ENCODE measurements at regions of chr12 and their contacts with region 1.

Region 1: GRCh38 chr12:85260904-85261303 is 19.1 kb upstream of the ALX1 start:
- DNase-seq: no peak
- ATAC-seq: no peak
- H3K4me3 ChIP-seq: no peak overlapping the region
- H3K27ac ChIP-seq: no peak overlapping the region
- H3K4me1 ChIP-seq: no peaks in the 10 kb centered on the region
- H3K27me3 ChIP-seq: no peaks in the 10 kb centered on the region
- CTCF ChIP-seq: no peak
- POLR2A ChIP-seq: no peak
- RAD21 ChIP-seq: no peak

Region 2: GRCh38 chr12:85007836-85008235 is 253.1 kb before region 1 on chr12:
- CTCF ChIA-PET with region 1: no interaction called
- POLR2A ChIA-PET with region 1: no interaction called
- dilution Hi-C with region 1: no loop called
- in situ Hi-C with region 1: no loop called
- intact Hi-C with region 1: no loop called
- DNase-seq: peak; percentile 5
- ATAC-seq: no peak
- H3K4me3 ChIP-seq: no peak overlapping the region
- H3K27ac ChIP-seq: no peak overlapping the region
- H3K4me1 ChIP-seq: peaks cover 2% of the 10 kb centered on the region; the same call in 1 of the 2 replicates
- H3K27me3 ChIP-seq: no peaks in the 10 kb centered on the region
- CTCF ChIP-seq: no peak
- POLR2A ChIP-seq: no peak
- RAD21 ChIP-seq: no peak

Region 3: GRCh38 chr12:85301051-85301450 is 40.1 kb after region 1 on chr12:
- CTCF ChIA-PET with region 1: no interaction called
- POLR2A ChIA-PET with region 1: no interaction called
- dilution Hi-C with region 1: no loop called
- in situ Hi-C with region 1: no loop called
- intact Hi-C with region 1: loop called (anchors 2 kb)
- DNase-seq: no peak
- ATAC-seq: no peak
- H3K4me3 ChIP-seq: no peak overlapping the region
- H3K27ac ChIP-seq: no peak overlapping the region
- H3K4me1 ChIP-seq: no peaks in the 10 kb centered on the region
- H3K27me3 ChIP-seq: no peaks in the 10 kb centered on the region
- CTCF ChIP-seq: no peak
- POLR2A ChIP-seq: no peak
- RAD21 ChIP-seq: no peak

Measured in IMR-90 (cell line).